Naive thymus-derived CD8-positive, alpha-beta T cell (primary cell): ENCODE measurements at regions of chr6 and their contacts with region 1.

Region 1: GRCh38 chr6:34425498-34426410 is at the start of gene RPS10:
- DNase-seq: peak; percentile 80 to 92 (median 89)
- ATAC-seq: peak; percentile 90 to 96
- H3K4me3 Mint-ChIP-seq: peak within 1 kb of the TSS; percentile 93 to 99 (median 98)
- H3K27ac Mint-ChIP-seq: peak within 1 kb of the TSS; percentile 96 to 99 (median 98)
- H3K4me1 Mint-ChIP-seq: peaks cover 11 to 39% (median 34%) of the 10 kb centered on the region in 4 donors
- H3K27me3 Mint-ChIP-seq: no peaks in the 10 kb centered on the region
- polyA plus RNA-seq, gene RPS10: 2,314 to 2,962 (median 2,356) TPM

Region 2: DNA sequence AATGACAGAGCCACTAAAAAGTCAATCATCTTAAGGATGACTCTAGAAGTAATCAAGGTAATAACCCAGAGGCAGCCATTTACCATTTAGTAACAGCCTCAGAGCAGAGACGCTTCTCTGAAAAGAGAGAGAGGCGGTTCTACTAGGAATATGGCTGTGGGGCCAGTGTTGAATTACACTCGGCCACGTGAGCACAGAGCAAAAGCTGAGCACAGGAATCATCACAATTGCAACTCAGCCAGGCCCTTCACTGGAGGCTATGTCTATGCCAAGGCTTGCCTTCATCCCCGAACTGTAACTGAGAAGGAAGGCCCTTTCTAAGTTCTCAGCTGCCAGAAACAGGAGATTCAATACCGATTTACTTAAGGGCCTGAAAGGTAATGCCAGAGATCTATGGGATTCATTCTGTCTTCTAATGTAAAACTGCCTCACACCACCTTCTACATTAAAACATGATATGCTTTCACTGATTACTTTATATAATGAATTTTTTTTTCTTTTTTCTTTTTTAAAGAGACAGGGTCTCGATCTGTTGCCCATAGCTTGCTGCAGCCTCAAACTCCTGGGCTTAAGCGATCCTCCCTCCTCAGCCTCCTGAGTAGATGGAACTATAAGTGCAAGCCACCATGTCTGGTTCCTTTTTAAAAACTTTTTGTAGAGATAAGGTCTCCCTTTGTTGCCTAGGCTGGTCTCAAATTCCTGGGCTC is 100.9 kb before region 1 on chr6:
- POLR2A ChIA-PET with region 1: no interaction called
- DNase-seq: no peak
- ATAC-seq: no peak
- H3K4me3 Mint-ChIP-seq: no peak overlapping the region
- H3K27ac Mint-ChIP-seq: peak overlapping the region in 3 of 10 donors; percentile 28 to 43 (median 40)
- H3K4me1 Mint-ChIP-seq: peaks cover 3 to 11% (median 5%) of the 10 kb centered on the region in 4 donors
- H3K27me3 Mint-ChIP-seq: no peaks in the 10 kb centered on the region

Region 3: GRCh38 chr6:34414999-34415858 is 10.5 kb before region 1 on chr6:
- POLR2A ChIA-PET with region 1: interaction called, 34 read pairs
- DNase-seq: peak in 9 of 10 donors; percentile 21 to 72 (median 35)
- ATAC-seq: peak; percentile 76 to 86
- H3K4me3 Mint-ChIP-seq: no peak overlapping the region
- H3K27ac Mint-ChIP-seq: peak overlapping the region in 4 of 10 donors; percentile 6 to 75 (median 53)
- H3K4me1 Mint-ChIP-seq: peaks cover 0 to 14% (median 9%) of the 10 kb centered on the region in 4 donors
- H3K27me3 Mint-ChIP-seq: no peaks in the 10 kb centered on the region